Heart left ventricle (tissue), 16 donors: ENCODE measurements at regions of chr17 and their contacts with region 1.

Region 1: DNA sequence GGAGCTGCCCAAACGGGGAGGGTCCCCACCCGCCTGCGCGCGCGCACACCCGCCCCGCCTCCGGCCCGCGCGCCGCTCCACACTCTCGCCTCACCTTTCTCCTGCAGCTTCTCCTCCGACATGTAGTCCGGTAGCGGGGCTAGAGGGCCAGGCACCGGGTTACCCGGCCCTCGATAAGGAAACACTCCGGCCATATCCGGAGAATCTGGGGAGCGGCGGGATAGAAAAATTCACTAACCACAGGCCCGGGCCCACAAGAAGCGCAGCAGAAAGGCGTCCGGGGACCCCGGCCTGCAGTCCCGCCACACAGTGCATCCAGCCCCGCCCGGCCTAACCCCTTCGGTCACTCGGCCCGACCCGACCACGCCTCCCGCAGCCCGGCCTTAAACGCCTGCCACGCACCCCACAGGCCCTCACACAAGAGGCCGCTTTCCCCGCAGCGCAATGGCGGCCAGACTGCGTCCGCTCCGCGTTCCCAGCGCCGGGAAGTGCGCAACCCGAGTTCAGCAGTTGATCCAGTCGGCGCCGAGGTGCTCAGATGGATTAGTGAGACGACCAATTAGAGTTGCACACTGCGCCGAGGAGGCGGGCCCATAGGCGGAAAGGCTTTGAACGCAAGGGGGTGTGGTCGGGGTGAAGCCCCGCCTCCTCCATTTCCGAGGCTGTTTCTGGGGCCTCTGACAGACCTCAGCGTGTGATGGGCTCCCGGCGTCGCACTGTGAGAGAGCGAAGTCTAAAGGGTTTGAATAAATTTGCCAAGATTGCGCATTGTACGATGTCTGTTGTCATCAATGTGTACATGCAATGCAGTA is at the start of gene PRPF8:
- DNase-seq: peak; percentile 97 to 98 (median 98)
- ATAC-seq: peak; percentile 100
- H3K4me3 ChIP-seq: peak within 1 kb of the TSS; percentile 72 to 98 (median 80)
- H3K27ac ChIP-seq: peak within 1 kb of the TSS; percentile 86 to 99 (median 94)
- H3K4me1 ChIP-seq: peaks cover 0 to 25% (median 20%) of the 10 kb centered on the region in 12 donors
- H3K27me3 ChIP-seq: no peaks in the 10 kb centered on the region
- CTCF ChIP-seq: peak in 2 of 12 donors; percentile 10 to 11
- POLR2A ChIP-seq: peak; percentile 89 to 91
- total RNA-seq, gene PRPF8: 119 to 195 (median 174) TPM

Region 2: DNA sequence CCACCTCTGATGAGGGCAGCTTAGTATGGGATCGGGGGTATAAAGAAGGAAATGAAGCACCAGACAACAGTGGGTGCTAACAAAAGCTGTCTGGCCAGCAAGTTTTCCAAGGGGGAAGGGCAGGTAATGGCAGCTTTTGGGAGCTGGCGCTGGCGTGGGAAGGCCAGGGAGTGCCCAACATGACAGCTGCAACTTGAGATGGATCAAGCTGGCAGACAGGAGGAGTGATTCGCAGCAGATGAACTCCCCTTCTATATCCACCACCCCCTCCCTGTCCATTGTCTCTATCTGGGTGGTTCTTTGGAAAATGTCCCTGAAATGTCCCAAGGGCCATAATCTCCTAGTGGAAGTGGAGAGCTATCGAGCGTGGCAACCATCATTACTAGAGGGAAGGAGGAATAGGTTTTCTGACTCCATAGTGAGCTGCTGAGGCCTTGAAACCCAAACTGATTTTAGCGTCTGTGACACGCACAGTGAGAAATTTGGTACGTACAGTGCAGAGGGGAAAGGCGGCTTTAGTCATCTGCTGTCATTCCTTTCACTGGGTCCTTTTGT is 163.4 kb before region 1 on chr17:
- intact Hi-C with region 1: no loop called
- DNase-seq: no peak
- ATAC-seq: no peak
- H3K4me3 ChIP-seq: no peak overlapping the region
- H3K27ac ChIP-seq: no peak overlapping the region
- H3K4me1 ChIP-seq: peaks cover 0 to 15% (median 7%) of the 10 kb centered on the region in 12 donors
- H3K27me3 ChIP-seq: no peaks in the 10 kb centered on the region
- CTCF ChIP-seq: no peak
- POLR2A ChIP-seq: no peak

Region 3: DNA sequence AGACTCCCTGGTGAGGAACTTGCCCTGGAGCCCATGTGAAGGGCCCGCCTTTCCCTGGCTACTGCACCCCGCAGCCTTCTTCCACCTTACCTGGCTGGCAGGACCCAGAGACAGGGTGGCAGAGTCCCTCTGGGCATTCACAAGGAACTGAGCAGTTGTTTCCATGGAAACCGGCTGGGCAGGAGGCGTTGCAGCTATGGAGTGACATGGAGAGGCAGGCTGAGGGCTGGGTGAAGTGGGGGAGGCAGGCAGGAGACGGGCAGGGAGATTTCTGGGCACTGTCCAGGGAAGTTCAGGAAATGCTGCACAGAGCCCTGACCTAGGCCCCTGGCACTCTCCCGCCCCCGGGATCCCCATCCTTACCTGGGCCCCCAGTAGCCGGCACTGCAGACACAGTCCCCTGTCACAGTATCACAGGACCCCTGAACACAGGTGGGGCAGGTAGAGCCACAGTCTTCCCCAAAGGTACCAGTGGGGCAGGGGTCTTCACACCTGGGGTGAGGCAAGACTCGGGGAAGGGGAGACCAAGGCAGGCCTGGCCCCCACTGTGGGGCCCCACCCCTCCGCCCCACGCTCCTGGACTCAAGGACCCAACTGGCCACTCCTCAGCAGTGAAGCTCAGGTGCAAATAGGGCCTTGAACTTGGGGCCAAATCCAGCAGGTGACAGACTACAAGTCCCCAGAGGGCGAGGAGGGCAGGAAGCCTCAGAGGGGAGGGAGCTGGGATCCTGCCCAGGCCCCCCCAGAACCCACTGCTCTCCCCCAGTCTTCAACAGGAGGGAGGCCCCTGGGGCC is 44.8 kb before region 1 on chr17:
- intact Hi-C with region 1: no loop called
- DNase-seq: peak in 1 of 5 donors; percentile 47
- ATAC-seq: no peak
- H3K4me3 ChIP-seq: no peak overlapping the region
- H3K27ac ChIP-seq: peak overlapping the region in 3 of 12 donors; percentile 24 to 37 (median 25)
- H3K4me1 ChIP-seq: peaks cover 0 to 32% (median 12%) of the 10 kb centered on the region in 12 donors
- H3K27me3 ChIP-seq: no peaks in the 10 kb centered on the region
- CTCF ChIP-seq: no peak
- POLR2A ChIP-seq: no peak

Region 4: DNA sequence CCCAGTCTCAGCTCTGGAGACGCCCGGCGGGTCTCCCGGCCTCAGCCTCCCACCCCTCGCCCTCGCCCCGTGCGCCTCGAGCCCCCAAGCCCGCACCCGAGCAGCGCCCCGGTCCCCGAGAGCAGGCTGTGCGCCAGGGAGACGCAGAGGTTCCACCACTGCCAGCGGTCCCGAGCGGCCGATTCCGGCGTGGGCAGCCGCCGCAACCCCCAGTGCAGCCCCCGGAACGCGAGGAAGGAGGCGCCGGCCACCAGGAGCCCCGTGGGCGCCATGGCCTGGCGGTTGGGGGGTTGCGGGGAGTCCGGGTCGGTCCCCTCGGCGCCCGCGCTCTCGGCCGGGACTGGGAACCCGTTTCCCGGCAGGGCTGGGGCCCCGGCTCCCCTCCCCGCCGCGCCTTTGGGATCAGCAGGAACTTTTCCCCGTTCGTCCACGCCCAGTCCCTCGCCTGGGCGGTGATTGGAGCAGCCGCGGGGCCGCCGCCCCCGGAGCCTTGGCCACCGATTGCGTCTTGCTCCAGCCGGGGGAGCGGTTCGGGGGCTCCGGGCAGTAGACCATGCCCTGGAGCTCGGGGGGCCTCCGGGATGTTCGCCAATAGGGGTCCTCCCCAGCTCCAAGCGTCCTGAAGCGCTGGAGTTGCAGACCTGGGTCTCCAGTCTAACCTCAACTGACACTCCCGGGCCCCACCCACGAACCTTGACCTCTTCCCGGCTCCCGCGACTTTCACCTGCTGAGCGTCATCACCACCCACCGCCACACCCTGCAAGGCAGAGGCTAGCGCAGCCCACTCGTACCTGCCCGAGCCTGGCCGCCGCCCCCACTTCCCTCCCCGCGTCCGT is 25.6 kb after region 1 on chr17 and contains the start of gene TLCD2:
- intact Hi-C with region 1: loop called in 4 of 10 experiments (anchors 2 to 5 kb)
- DNase-seq: peak; percentile 81 to 88 (median 84)
- ATAC-seq: peak in 3 of 4 donors; percentile 20 to 54 (median 50)
- H3K4me3 ChIP-seq: peak within 1 kb of the TSS; percentile 57 to 98 (median 75)
- H3K27ac ChIP-seq: peak within 1 kb of the TSS; percentile 15 to 88 (median 80)
- H3K4me1 ChIP-seq: peaks cover 4 to 55% (median 42%) of the 10 kb centered on the region in 12 donors
- H3K27me3 ChIP-seq: no peaks in the 10 kb centered on the region
- CTCF ChIP-seq: no peak
- POLR2A ChIP-seq: peak in 1 of 2 donors; percentile 67
- total RNA-seq, gene TLCD2: 1.5 to 6.1 (median 2.3) TPM

Region 5: DNA sequence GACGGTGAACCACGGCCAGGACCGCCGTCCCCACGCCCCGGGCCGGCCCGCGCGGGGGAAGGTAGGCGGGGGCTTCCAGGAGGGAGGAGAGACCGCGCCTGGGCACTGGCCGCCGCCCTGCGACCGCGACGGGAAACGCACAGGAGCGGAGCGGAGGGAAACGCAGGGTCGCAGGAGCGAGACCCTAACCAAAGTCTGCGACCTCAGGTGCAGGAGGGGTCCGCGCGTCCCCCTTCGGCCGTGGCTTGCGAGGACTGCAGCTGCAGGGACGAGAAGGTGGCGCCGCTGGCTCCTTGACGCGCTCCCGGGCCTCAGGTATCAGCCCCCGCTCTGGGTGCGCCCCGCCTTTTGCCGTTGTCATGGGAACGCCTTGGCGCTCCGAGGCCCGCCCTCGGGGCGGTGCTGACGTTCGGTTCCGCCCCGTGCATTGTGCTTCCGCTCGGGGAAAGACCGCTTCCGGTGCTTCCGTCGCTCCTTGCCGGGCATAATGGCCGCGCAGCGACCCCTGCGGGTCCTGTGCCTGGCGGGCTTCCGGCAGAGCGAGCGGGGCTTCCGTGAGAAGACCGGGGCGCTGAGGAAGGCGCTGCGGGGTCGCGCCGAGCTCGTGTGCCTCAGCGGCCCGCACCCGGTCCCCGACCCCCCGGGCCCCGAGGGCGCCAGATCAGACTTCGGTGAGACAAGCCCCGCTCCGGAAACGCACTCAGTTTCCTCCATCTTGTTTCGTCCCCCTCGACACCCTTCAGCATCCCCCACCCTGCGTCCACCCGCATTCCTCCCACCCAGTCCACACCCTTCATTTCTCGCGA is 357.2 kb after region 1 on chr17 and contains the start of gene OVCA2:
- intact Hi-C with region 1: loop called in 2 of 10 experiments (anchors 10 kb)
- DNase-seq: peak; percentile 95 to 97 (median 95)
- ATAC-seq: peak; percentile 77 to 96 (median 93)
- H3K4me3 ChIP-seq: peak within 1 kb of the TSS; percentile 43 to 87 (median 76)
- H3K27ac ChIP-seq: peak within 1 kb of the TSS; percentile 81 to 97 (median 93)
- H3K4me1 ChIP-seq: peaks cover 3 to 38% (median 22%) of the 10 kb centered on the region in 12 donors
- H3K27me3 ChIP-seq: no peaks in the 10 kb centered on the region
- CTCF ChIP-seq: peak; percentile 35 to 81 (median 65)
- POLR2A ChIP-seq: peak in 1 of 2 donors; percentile 77
- total RNA-seq, gene OVCA2: 16.0 to 30.2 (median 20.0) TPM